PC-3 (cell line): ENCODE measurements at regions of chr1 and their contacts with region 1.

Region 1: DNA sequence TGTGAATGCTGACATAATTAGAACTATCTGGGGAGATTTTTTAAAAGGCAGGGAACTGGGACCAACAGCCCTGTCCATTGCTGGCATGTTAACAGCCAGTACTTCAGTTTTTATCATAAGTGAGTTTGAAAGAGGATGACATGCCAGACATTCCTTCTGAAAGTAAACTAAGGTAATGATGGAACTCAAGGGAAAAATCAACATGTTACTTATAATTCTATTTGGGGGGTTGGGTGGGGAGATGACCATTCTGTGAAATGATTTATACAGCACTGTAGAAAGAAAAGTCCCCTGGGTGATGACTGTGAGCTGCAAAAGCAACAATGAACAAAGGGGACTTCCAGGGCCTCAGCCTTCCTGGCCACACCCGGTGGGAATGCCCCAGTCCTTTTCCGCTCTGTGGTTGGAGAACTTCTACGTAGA is 5.4 kb upstream of the LAMC2 start:
- DNase-seq: peak; percentile 58
- ATAC-seq: peak; percentile 78
- H3K4me3 ChIP-seq: no peak overlapping the region
- H3K27ac ChIP-seq: peak overlapping the region; percentile 78
- H3K4me1 ChIP-seq: peaks cover 27% of the 10 kb centered on the region
- H3K27me3 ChIP-seq: no peaks in the 10 kb centered on the region
- CTCF ChIP-seq: no peak

Region 2: GRCh38 chr1:183070923-183071618 is 109.6 kb before region 1 on chr1:
- CTCF ChIA-PET with region 1: no interaction called
- POLR2A ChIA-PET with region 1: no interaction called
- intact Hi-C with region 1: loop called (anchors 10 kb)
- DNase-seq: peak; percentile 69
- ATAC-seq: peak; percentile 43
- H3K4me3 ChIP-seq: 0 out of 2 replicates have a peak overlapping the region, but pooled peaks have one; percentile 26
- H3K27ac ChIP-seq: peak overlapping the region; percentile 96
- H3K4me1 ChIP-seq: peaks cover 46% of the 10 kb centered on the region
- H3K27me3 ChIP-seq: no peaks in the 10 kb centered on the region
- CTCF ChIP-seq: no peak

Region 3: DNA sequence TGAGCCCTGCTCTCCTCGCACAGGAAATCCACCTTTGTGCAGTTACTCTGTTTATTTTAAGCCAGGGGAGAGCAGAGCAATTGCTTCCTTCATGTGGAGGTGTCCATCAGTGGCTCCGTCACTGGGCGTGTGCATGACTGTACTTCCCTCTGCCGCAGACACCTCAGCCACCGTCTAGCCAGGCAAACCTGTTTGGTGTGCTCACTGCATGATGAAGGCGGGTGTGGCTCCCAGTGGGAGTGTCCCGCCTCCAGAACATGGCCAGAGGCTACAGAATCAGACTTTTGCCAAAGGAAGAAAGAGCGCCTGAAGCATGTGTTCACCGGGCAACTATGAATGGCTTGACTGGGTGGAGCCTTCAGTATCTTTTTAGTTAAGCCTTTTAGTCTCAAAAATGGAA is 20.7 kb before region 1 on chr1:
- CTCF ChIA-PET with region 1: interaction called, 3 read pairs
- POLR2A ChIA-PET with region 1: interaction called, 6 read pairs
- intact Hi-C with region 1: loop called (anchors 2 kb)
- DNase-seq: peak; percentile 98
- ATAC-seq: peak; percentile 74
- H3K4me3 ChIP-seq: no peak overlapping the region
- H3K27ac ChIP-seq: peak overlapping the region; percentile 98
- H3K4me1 ChIP-seq: peaks cover 63% of the 10 kb centered on the region
- H3K27me3 ChIP-seq: no peaks in the 10 kb centered on the region
- CTCF ChIP-seq: no peak